GM10248 (cell line): ENCODE measurements at regions of chr1 and their contacts with region 1.

Region 1: DNA sequence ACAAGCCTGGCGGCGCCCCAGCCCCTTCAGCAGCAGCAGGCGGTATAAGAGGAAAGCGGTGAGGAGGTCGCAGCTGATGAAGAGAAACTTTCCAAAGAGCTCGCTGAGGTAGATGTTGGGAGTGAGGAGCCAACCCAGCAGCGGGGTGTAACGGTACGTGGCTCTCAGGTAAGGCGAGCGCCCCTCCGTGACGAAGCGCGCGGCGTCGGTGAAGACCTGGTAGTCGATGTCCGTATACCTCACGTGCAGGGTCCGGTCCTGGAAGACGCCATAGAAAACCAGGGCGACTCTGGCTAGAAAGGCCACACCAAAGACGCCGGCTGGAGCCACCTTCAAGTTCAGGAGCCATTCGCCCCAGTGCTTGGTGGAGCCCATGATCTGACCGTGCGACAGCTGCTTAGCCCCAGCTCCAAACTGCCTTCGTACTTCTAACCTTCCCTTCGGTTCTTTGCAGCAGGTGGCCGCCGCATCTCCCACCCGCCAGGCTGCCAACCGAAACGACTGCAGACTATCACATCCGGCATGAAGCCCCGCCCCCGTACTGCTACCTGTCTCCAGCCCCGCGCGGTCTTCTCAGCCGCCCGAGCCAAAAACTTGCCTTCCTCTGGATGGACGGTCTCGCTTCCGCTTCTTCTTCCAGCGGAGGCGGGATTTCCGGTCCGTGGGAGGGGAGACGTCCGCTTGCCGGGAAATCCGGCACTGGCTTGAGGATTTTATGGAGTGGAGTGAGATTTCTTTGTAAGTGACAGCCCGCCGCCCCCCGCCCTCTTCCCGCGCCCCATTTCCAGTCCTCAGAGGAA is at the start of gene PIGM:
- DNase-seq: peak; percentile 93
- CTCF ChIP-seq: no peak

Region 2: GRCh38 chr1:160078512-160079195 is 47.1 kb after region 1 on chr1:
- CTCF ChIA-PET with region 1: interaction called, 22 read pairs
- POLR2A ChIA-PET with region 1: no interaction called
- DNase-seq: peak; percentile 71
- CTCF ChIP-seq: peak; percentile 77